CD4-positive, alpha-beta memory T cell (primary cell): ENCODE measurements at regions of chr18 and their contacts with region 1.

Region 1: DNA sequence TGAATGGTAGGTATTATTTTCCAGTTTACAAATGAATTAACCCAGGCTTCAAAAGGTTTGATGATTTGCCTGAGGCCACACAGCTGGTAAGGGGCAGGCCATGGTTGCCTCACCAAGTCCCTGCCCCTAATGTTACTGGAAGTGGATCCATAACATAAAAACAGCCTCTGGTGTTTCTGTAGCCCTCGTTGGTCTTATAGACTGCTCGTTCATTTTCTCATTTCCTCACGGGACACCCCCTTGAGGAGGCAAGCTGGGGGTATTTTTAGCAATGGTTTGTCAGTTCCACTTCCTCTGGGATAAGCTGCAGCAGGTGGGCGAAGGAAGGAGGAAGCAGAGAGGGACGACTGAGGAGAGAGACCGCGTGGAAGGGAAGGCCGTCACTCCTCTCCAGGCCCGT is 32.9 kb upstream of the NDUFV2 start:
- DNase-seq: no peak
- H3K4me3 ChIP-seq: no peak overlapping the region
- H3K4me3 Mint-ChIP-seq: no peak overlapping the region
- H3K27ac ChIP-seq: no peak overlapping the region
- H3K27ac Mint-ChIP-seq: peak overlapping the region in 1 of 7 donors; percentile 58
- H3K4me1 ChIP-seq: peaks cover 9% of the 10 kb centered on the region
- H3K4me1 Mint-ChIP-seq: peaks cover 6 to 21% (median 14%) of the 10 kb centered on the region in 4 donors
- H3K27me3 ChIP-seq: no peaks in the 10 kb centered on the region
- H3K27me3 Mint-ChIP-seq: no peaks in the 10 kb centered on the region

Region 2: DNA sequence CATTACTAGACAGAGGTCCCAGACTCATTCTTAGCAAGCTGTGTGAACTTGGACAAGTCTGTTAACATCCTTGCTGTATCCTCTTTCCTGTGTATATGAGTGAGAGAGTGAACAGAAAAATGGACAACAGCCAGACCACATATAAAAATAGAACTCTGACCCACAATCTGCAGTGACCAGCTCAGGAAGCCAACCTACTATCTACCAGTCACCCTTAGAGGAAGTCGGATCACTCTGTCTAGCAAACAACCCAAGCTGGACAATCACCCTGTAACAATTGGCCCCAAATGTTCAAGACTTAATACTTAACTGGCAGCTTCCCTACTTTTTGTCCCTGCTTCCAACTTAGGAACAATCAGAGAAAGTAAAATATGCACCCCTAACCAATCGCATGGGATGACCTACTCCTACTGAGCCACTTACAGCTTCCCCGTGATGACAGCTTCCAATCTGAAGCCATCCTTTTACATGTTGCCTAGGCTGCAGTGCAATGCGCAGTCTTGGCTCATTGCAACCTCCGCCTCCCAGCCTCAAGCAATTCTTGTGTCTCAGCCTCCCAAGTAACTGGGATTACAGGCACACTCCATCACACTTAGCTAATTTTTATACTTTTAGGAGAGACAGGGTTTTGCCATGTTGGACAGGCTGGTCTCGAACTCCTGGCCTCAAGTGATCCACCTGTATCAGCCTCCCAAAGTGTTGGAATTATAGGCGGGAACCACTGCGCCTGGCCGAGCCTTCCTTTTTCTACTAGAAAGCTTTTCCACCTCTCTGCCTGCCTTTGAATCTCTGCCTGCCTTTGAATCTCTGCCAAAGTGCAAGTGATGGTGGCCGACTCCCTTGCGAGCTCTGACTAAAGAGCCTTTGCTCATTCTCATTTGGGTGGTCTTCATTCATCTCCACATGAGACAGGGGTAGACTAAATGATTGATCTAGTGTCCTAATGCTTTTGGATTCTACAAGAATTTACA is 125.4 kb before region 1 on chr18:
- CTCF ChIA-PET with region 1: no interaction called
- POLR2A ChIA-PET with region 1: no interaction called
- intact Hi-C with region 1: no loop called
- DNase-seq: no peak
- H3K4me3 ChIP-seq: no peak overlapping the region
- H3K4me3 Mint-ChIP-seq: no peak overlapping the region
- H3K27ac ChIP-seq: no peak overlapping the region
- H3K27ac Mint-ChIP-seq: no peak overlapping the region
- H3K4me1 ChIP-seq: no peaks in the 10 kb centered on the region
- H3K4me1 Mint-ChIP-seq: peaks cover 0 to 3% (median 1%) of the 10 kb centered on the region in 4 donors
- H3K27me3 ChIP-seq: no peaks in the 10 kb centered on the region
- H3K27me3 Mint-ChIP-seq: peaks cover 7% of the 10 kb centered on the region in 2 donors

Region 3: DNA sequence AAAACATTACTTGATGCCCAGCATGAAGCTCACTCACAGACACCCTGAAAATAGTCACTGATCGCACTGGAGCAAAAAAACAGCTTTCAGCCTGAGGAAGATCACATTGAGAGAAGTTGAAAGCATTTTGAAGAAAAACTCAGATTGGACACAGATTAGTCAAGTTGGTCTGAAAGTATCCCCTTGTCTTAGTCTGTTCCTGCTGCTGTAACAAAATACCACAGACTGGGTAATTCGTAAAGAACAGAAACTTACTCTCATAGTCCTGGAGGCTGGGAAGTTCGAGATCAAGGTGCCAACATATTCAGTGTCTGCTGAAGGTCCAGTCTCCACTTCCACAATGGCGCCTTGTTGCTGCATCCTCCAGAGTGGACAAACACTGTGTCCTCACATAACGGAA is 18.7 kb after region 1 on chr18:
- CTCF ChIA-PET with region 1: interaction called, 41 read pairs
- POLR2A ChIA-PET with region 1: interaction called, 20 read pairs
- intact Hi-C with region 1: no loop called
- DNase-seq: no peak
- H3K4me3 ChIP-seq: no peak overlapping the region
- H3K4me3 Mint-ChIP-seq: peak overlapping the region in 1 of 8 donors; percentile 49
- H3K27ac ChIP-seq: no peak overlapping the region
- H3K27ac Mint-ChIP-seq: peak overlapping the region; percentile 53 to 91 (median 75)
- H3K4me1 ChIP-seq: peaks cover 78% of the 10 kb centered on the region
- H3K4me1 Mint-ChIP-seq: peaks cover 33 to 77% (median 58%) of the 10 kb centered on the region in 4 donors
- H3K27me3 ChIP-seq: no peaks in the 10 kb centered on the region
- H3K27me3 Mint-ChIP-seq: no peaks in the 10 kb centered on the region

Region 4: GRCh38 chr18:9102508-9103375 is 33.1 kb after region 1 on chr18 and contains the start of gene NDUFV2:
- CTCF ChIA-PET with region 1: interaction called, 26 read pairs
- POLR2A ChIA-PET with region 1: interaction called, 11 read pairs
- intact Hi-C with region 1: loop called (anchors 1 kb)
- DNase-seq: peak; percentile 95 to 97 (median 97)
- H3K4me3 ChIP-seq: peak within 1 kb of the TSS; percentile 81 to 92
- H3K4me3 Mint-ChIP-seq: peak within 1 kb of the TSS; percentile 89 to 96 (median 94)
- H3K27ac ChIP-seq: peak within 1 kb of the TSS; percentile 82
- H3K27ac Mint-ChIP-seq: peak within 1 kb of the TSS; percentile 94 to 99 (median 97)
- H3K4me1 ChIP-seq: peaks cover 55% of the 10 kb centered on the region
- H3K4me1 Mint-ChIP-seq: peaks cover 37 to 65% (median 52%) of the 10 kb centered on the region in 4 donors
- H3K27me3 ChIP-seq: no peaks in the 10 kb centered on the region
- H3K27me3 Mint-ChIP-seq: no peaks in the 10 kb centered on the region
- total RNA-seq, gene NDUFV2: 135 TPM

Region 5: GRCh38 chr18:9136315-9137155 is 66.9 kb after region 1 on chr18 and contains the start of gene ANKRD12:
- CTCF ChIA-PET with region 1: interaction called, 57 read pairs
- POLR2A ChIA-PET with region 1: interaction called, 238 read pairs
- intact Hi-C with region 1: no loop called
- DNase-seq: peak; percentile 97 to 99 (median 98)
- H3K4me3 ChIP-seq: peak within 1 kb of the TSS; percentile 52 to 88
- H3K4me3 Mint-ChIP-seq: peak within 1 kb of the TSS; percentile 97 to 99 (median 98)
- H3K27ac ChIP-seq: peak within 1 kb of the TSS; percentile 90
- H3K27ac Mint-ChIP-seq: peak within 1 kb of the TSS; percentile 99 to 100 (median 99)
- H3K4me1 ChIP-seq: peaks cover 72% of the 10 kb centered on the region
- H3K4me1 Mint-ChIP-seq: peaks cover 43 to 85% (median 57%) of the 10 kb centered on the region in 4 donors
- H3K27me3 ChIP-seq: no peaks in the 10 kb centered on the region
- H3K27me3 Mint-ChIP-seq: peaks cover 0 to 2% of the 10 kb centered on the region in 2 donors
- total RNA-seq, gene ANKRD12: 262 to 280 TPM

Region 6: GRCh38 chr18:9160014-9160413 is 90.4 kb after region 1 on chr18:
- CTCF ChIA-PET with region 1: interaction called, 10 read pairs
- POLR2A ChIA-PET with region 1: interaction called, 3 read pairs
- intact Hi-C with region 1: no loop called
- DNase-seq: no peak
- H3K4me3 ChIP-seq: no peak overlapping the region
- H3K4me3 Mint-ChIP-seq: peak overlapping the region in 1 of 8 donors; percentile 11
- H3K27ac ChIP-seq: no peak overlapping the region
- H3K27ac Mint-ChIP-seq: peak overlapping the region in 1 of 7 donors; percentile 22
- H3K4me1 ChIP-seq: peaks cover 48% of the 10 kb centered on the region
- H3K4me1 Mint-ChIP-seq: peaks cover 56 to 83% (median 67%) of the 10 kb centered on the region in 4 donors
- H3K27me3 ChIP-seq: no peaks in the 10 kb centered on the region
- H3K27me3 Mint-ChIP-seq: no peaks in the 10 kb centered on the region

Region 7: DNA sequence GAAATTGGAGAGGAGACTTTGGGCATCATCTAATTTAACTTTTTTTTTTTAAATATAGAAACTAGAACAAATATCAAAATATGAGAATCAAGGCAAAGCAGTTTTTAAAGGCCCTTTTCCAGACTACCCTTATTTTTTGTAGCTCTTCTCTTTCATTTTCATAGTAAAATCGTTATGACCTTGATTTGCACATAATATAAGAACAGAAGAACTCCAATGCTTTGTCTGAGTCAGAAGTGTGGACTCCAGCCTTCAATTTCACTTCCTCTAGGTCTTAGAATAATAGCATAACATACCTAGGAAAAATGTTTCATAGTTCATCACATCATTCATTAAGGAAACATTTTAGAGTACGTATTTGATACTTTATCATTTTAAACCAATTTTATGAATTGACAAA is 141.4 kb after region 1 on chr18:
- CTCF ChIA-PET with region 1: interaction called, 4 read pairs
- POLR2A ChIA-PET with region 1: no interaction called
- intact Hi-C with region 1: loop called (anchors 5 kb)
- DNase-seq: no peak
- H3K4me3 ChIP-seq: no peak overlapping the region
- H3K4me3 Mint-ChIP-seq: no peak overlapping the region
- H3K27ac ChIP-seq: no peak overlapping the region
- H3K27ac Mint-ChIP-seq: peak overlapping the region in 2 of 7 donors; percentile 17 to 64
- H3K4me1 ChIP-seq: peaks cover 9% of the 10 kb centered on the region
- H3K4me1 Mint-ChIP-seq: peaks cover 4 to 25% (median 15%) of the 10 kb centered on the region in 4 donors
- H3K27me3 ChIP-seq: no peaks in the 10 kb centered on the region
- H3K27me3 Mint-ChIP-seq: no peaks in the 10 kb centered on the region

Region 8: DNA sequence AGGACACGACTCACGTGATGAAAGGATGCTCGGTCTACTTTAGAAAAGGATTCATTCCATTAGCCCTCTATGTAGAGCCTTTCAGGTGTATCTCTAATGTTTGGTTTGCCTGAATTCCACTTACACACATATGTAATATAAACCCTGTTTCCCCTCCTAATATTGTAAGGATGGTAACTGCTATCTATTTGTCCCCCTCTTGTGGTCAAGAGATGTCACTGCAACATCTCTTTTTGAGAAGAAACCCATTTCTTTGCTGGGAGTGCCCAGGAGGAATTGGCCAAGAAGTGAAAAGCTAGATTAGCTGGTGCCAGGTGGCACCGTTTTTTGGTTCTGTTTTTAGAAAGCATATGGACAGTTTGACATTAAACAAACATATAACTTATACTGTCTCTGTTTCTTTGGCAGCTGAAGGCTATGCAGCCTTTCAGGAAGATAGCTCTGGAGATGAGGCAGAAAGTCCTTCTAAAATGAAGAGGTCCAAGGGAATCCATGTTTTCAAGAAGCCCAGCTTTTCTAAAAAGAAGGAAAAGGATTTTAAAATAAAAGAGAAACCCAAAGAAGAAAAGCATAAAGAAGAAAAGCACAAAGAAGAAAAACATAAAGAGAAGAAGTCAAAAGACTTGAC is 446.9 kb after region 1 on chr18:
- CTCF ChIA-PET with region 1: interaction called, 13 read pairs
- POLR2A ChIA-PET with region 1: no interaction called
- intact Hi-C with region 1: loop called (anchors 1 kb)
- DNase-seq: peak in 4 of 5 donors; percentile 35 to 50 (median 46)
- H3K4me3 ChIP-seq: no peak overlapping the region
- H3K4me3 Mint-ChIP-seq: no peak overlapping the region
- H3K27ac ChIP-seq: no peak overlapping the region
- H3K27ac Mint-ChIP-seq: peak overlapping the region in 3 of 7 donors; percentile 14 to 61 (median 30)
- H3K4me1 ChIP-seq: no peaks in the 10 kb centered on the region
- H3K4me1 Mint-ChIP-seq: peaks cover 0 to 12% (median 5%) of the 10 kb centered on the region in 4 donors
- H3K27me3 ChIP-seq: no peaks in the 10 kb centered on the region
- H3K27me3 Mint-ChIP-seq: no peaks in the 10 kb centered on the region